ENCODE measurements at regions of chr19 and their contacts with region 1.

Region 1: GRCh38 chr19:16584248-16585141 is 12.3 kb upstream of the SLC35E1 start:
- DNase-seq: peak; percentile 95
- H3K4me3 Mint-ChIP-seq: peak overlapping the region; percentile 83
- H3K27ac Mint-ChIP-seq: peak overlapping the region; percentile 96
- H3K4me1 Mint-ChIP-seq: peaks cover 92% of the 10 kb centered on the region
- H3K27me3 Mint-ChIP-seq: no peaks in the 10 kb centered on the region

Region 2: GRCh38 chr19:16111160-16111908 is 473.2 kb before region 1 on chr19 and contains the start of gene RAB8A:
- CTCF ChIA-PET with region 1: no interaction called
- POLR2A ChIA-PET with region 1: no interaction called
- intact Hi-C with region 1: loop called (anchors 1 kb)
- DNase-seq: peak; percentile 99
- H3K4me3 Mint-ChIP-seq: peak within 1 kb of the TSS; percentile 98
- H3K27ac Mint-ChIP-seq: peak within 1 kb of the TSS; percentile 97
- H3K4me1 Mint-ChIP-seq: peaks cover 40% of the 10 kb centered on the region
- H3K27me3 Mint-ChIP-seq: no peaks in the 10 kb centered on the region
- total RNA-seq, gene RAB8A: 146 to 154 TPM

Region 3: DNA sequence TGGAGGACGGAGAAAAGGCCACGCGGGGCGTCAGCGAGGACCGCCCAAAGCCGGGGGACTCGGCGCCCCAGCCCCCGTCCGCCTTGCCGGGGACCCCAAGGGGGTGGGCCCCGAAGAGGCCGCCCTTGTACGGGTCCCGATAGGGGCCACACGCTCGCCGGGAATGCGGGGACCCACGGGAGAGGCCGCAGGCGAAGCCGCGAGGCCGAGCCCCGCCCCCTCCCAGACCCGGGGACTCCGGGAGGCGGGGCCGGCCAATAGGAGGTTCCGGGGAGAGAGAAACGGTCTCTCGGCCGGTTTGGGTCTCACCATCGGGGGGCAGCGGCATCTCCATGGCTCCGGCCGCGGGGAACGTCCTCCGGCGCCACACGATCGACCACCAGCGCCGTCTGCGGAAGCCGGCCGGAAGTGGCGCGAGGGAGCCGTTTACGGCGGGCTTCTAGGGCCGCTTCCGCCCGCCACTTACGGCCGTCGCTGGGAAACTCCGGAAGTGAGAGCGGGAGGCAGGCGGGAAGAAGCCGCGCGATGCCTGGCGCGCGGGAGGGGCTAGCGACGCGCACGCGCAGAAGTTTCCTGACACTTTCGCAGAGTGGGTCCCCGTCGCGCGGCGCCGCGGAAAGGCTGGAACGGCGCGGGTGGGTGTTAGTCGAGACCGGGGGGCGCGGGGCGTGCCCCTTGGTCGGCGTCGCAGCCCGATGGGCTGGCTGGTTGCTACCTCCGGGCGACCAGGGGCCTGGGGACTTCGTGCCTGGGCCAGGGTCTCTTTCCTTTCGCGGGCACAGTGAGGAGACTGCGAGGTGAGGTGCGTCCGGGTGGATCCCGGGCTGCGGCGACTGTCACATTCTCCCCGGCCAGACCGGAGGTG is 42.2 kb before region 1 on chr19 and contains the start of gene CHERP:
- CTCF ChIA-PET with region 1: interaction called, 3 read pairs
- POLR2A ChIA-PET with region 1: interaction called, 6 read pairs
- intact Hi-C with region 1: loop called (anchors 1 kb)
- DNase-seq: peak; percentile 96
- H3K4me3 Mint-ChIP-seq: peak within 1 kb of the TSS; percentile 84
- H3K27ac Mint-ChIP-seq: peak within 1 kb of the TSS; percentile 81
- H3K4me1 Mint-ChIP-seq: peaks cover 53% of the 10 kb centered on the region
- H3K27me3 Mint-ChIP-seq: no peaks in the 10 kb centered on the region
- total RNA-seq, gene CHERP: 50.8 TPM

Region 4: GRCh38 chr19:16554776-16555175 is 29.7 kb before region 1 on chr19:
- CTCF ChIA-PET with region 1: no interaction called
- POLR2A ChIA-PET with region 1: no interaction called
- intact Hi-C with region 1: no loop called
- DNase-seq: no peak
- H3K4me3 Mint-ChIP-seq: no peak overlapping the region
- H3K27ac Mint-ChIP-seq: no peak overlapping the region
- H3K4me1 Mint-ChIP-seq: peaks cover 11% of the 10 kb centered on the region
- H3K27me3 Mint-ChIP-seq: no peaks in the 10 kb centered on the region

Region 5: GRCh38 chr19:16572332-16573211 is 11.9 kb before region 1 on chr19 and contains the start of gene SLC35E1:
- CTCF ChIA-PET with region 1: interaction called, 9 read pairs
- POLR2A ChIA-PET with region 1: interaction called, 28 read pairs
- intact Hi-C with region 1: loop called (anchors 1 kb)
- DNase-seq: peak; percentile 95
- H3K4me3 Mint-ChIP-seq: peak within 1 kb of the TSS; percentile 92
- H3K27ac Mint-ChIP-seq: peak within 1 kb of the TSS; percentile 93
- H3K4me1 Mint-ChIP-seq: peaks cover 53% of the 10 kb centered on the region
- H3K27me3 Mint-ChIP-seq: no peaks in the 10 kb centered on the region
- total RNA-seq, gene SLC35E1: 42.0 to 46.0 TPM

Region 6: DNA sequence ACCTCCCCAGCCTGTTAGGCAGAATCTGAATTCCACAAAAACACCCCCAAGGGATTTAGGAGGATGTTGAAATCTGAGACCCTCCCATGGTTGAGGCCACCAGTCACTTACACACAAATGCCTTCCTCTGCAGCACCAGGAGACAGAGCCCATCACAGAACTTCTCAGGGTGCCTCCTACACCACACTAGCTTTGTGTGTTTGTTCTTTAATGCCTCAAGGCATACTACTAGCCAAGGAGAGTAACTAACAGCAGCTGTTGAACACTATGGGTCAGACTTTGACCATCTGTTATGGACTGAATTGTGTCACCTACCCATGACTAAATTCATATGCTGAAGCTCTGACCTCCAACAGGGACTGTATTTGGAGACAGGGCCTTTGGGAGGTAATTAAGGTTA is 53.0 kb after region 1 on chr19:
- CTCF ChIA-PET with region 1: no interaction called
- POLR2A ChIA-PET with region 1: no interaction called
- intact Hi-C with region 1: no loop called
- DNase-seq: no peak
- H3K4me3 Mint-ChIP-seq: no peak overlapping the region
- H3K27ac Mint-ChIP-seq: no peak overlapping the region
- H3K4me1 Mint-ChIP-seq: peaks cover 9% of the 10 kb centered on the region
- H3K27me3 Mint-ChIP-seq: no peaks in the 10 kb centered on the region

Region 7: DNA sequence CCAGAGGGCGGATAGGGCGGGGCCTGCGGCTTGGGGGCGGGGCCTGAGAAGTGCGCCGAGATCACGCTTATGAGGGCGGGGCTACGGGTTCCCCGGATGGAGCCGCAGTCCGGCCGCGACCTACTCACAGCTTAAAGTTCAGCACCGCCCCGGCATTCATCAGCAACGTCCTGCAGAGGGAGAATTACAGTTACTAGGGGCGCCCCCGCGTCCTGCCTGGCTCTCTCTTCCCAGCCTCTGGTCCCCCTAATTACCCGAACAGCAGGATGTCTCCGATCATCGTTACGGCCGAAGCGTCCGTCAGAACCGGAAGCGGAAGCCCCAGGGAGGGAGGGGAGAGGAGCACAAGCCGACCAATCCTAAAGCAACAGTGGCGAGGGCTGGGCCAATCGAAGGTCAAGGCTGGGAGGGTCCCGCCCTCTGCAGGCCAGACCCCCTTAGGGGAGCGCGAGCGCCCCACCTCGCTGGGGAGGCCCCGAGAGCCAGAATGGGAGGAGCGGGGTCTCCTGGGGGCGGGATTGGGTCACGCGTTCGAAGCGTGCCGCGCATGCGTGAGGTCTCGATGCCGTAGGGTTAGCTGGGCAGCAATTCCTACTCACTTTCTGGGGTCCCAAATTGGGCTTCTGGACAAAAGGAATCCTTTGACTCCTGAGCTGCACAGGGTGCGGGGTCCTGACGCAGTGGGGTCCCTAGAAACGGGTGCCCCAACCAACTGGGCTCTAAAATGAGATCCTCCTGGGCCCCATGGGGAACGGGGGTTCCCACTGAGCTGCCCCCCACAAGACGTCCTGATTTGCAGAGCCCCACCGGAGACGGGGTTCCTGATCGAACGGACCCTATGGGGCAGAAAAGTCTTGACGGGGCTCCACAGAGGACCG is 75.6 kb after region 1 on chr19 and contains the start of gene SMIM7:
- CTCF ChIA-PET with region 1: no interaction called
- POLR2A ChIA-PET with region 1: interaction called, 9 read pairs
- intact Hi-C with region 1: loop called (anchors 1 kb)
- DNase-seq: peak; percentile 99
- H3K4me3 Mint-ChIP-seq: peak within 1 kb of the TSS; percentile 93
- H3K27ac Mint-ChIP-seq: peak within 1 kb of the TSS; percentile 95
- H3K4me1 Mint-ChIP-seq: peaks cover 28% of the 10 kb centered on the region
- H3K27me3 Mint-ChIP-seq: peaks cover 2% of the 10 kb centered on the region
- total RNA-seq, gene SMIM7: 50.5 to 50.9 TPM

Measured in activated CD4-positive, alpha-beta memory T cell treated with anti-CD3 and anti-CD28 coated beads for 36 hours (primary cell).